ENCODE measurements at regions of chr2 and their contacts with region 1.

Region 1: GRCh38 chr2:190334479-190335224 is 8.7 kb upstream of the INPP1 start:
- DNase-seq: peak; percentile 96
- ATAC-seq: peak; percentile 96
- H3K4me3 ChIP-seq: peak overlapping the region; percentile 59 to 70 (median 67); a peak in 5 of 6 replicates
- H3K27ac ChIP-seq: peak overlapping the region; percentile 84
- H3K4me1 ChIP-seq: peaks cover 54% of the 10 kb centered on the region
- H3K27me3 ChIP-seq: no peaks in the 10 kb centered on the region
- CTCF ChIP-seq: 0 out of 2 replicates have a peak, but pooled peaks have one; percentile 25
- EP300 ChIP-seq: peak; percentile 85 to 96
- POLR2A ChIP-seq: peak; percentile 72 to 77
- RAD21 ChIP-seq: no peak

Region 2: GRCh38 chr2:190304404-190304803 is 30.2 kb before region 1 on chr2:
- CTCF ChIA-PET with region 1: no interaction called
- POLR2A ChIA-PET with region 1: no interaction called
- in situ Hi-C with region 1: no loop called
- intact Hi-C with region 1: no loop called
- DNase-seq: no peak
- ATAC-seq: no peak
- H3K4me3 ChIP-seq: no peak overlapping the region
- H3K27ac ChIP-seq: no peak overlapping the region
- H3K4me1 ChIP-seq: no peaks in the 10 kb centered on the region
- H3K27me3 ChIP-seq: no peaks in the 10 kb centered on the region
- CTCF ChIP-seq: no peak
- EP300 ChIP-seq: no peak
- POLR2A ChIP-seq: no peak
- RAD21 ChIP-seq: no peak

Region 3: GRCh38 chr2:190369635-190370034 is 35.0 kb after region 1 on chr2:
- CTCF ChIA-PET with region 1: no interaction called
- POLR2A ChIA-PET with region 1: no interaction called
- in situ Hi-C with region 1: loop called (anchors 5 kb)
- intact Hi-C with region 1: loop called (anchors 1 kb)
- DNase-seq: no peak
- ATAC-seq: no peak
- H3K4me3 ChIP-seq: no peak overlapping the region
- H3K27ac ChIP-seq: no peak overlapping the region
- H3K4me1 ChIP-seq: peaks cover 10% of the 10 kb centered on the region; the same call in 1 of the 2 replicates
- H3K27me3 ChIP-seq: no peaks in the 10 kb centered on the region; a peak in 1 of 5 replicates
- CTCF ChIP-seq: no peak
- EP300 ChIP-seq: no peak
- POLR2A ChIP-seq: no peak
- RAD21 ChIP-seq: no peak

Region 4: GRCh38 chr2:191013932-191014652 is 679.4 kb after region 1 on chr2 and contains the start of gene STAT1:
- CTCF ChIA-PET with region 1: no interaction called
- POLR2A ChIA-PET with region 1: no interaction called
- in situ Hi-C with region 1: no loop called
- intact Hi-C with region 1: loop called (anchors 10 kb)
- DNase-seq: peak; percentile 89
- ATAC-seq: peak; percentile 95
- H3K4me3 ChIP-seq: peak within 1 kb of the TSS; percentile 81 to 92 (median 89)
- H3K27ac ChIP-seq: peak within 1 kb of the TSS; percentile 81
- H3K4me1 ChIP-seq: peaks cover 39% of the 10 kb centered on the region
- H3K27me3 ChIP-seq: peaks cover 0 to 7% of the 10 kb centered on the region in 2 experiments; a peak in 1 of 5 replicates
- CTCF ChIP-seq: peak; percentile 27; the same call in 1 of the 2 replicates
- EP300 ChIP-seq: peak; percentile 56 to 100; a peak in 3 of 4 replicates
- POLR2A ChIP-seq: peak; percentile 95 to 96
- RAD21 ChIP-seq: peak; percentile 66
- total RNA-seq, gene STAT1: 59.6 and 90.6 TPM in 2 replicates